Heart right ventricle (tissue), 16 donors: ENCODE measurements at regions of chr16 and their contacts with region 1.

Region 1: GRCh38 chr16:48164907-48165726 is 9.3 kb upstream of the ABCC12 start:
- DNase-seq: peak; percentile 77 to 82
- ATAC-seq: peak; percentile 91 to 98 (median 96)
- H3K4me3 ChIP-seq: no peak overlapping the region
- H3K27ac ChIP-seq: no peak overlapping the region
- H3K4me1 ChIP-seq: peaks cover 0 to 26% (median 7%) of the 10 kb centered on the region in 9 donors
- H3K27me3 ChIP-seq: no peaks in the 10 kb centered on the region
- CTCF ChIP-seq: peak; percentile 73 to 93 (median 87)

Region 2: DNA sequence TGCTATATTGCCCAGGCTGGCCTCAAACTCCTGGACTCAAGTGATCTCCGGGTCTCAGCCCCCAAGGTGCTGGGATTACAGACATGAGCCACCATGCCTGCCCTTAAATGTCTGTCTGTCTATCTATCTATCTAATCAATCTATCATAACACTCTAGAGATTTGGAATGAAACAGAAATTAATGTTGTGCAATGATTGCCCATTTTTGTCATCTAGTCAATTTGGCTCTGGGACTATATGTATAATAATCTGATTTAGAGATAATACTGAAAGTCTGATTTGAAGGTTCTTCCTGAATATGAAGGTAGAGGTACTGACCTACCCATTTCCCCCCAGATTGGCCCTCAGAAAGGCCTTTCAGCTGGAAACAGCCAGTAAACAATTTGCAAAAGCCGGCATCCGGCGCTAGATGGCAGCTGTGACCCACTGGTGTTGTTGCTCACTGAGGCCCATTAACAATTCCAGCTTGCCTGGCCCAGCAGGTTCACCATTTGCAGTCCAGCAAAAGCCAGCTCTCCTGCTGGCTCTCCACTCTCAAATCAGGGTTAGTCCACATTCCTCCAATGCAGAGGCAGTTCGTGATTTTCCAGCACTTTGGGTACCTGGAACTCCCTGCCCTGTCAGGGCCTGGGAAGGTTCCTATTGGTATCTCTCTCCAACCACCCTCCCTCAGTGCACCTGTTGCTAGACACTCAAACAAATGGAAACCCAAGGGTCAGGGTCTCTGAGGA is 1311.2 kb before region 1 on chr16:
- intact Hi-C with region 1: loop called in 3 of 10 experiments (anchors 5 to 10 kb)
- DNase-seq: peak; percentile 74 to 76
- ATAC-seq: peak; percentile 65 to 85 (median 81)
- H3K4me3 ChIP-seq: no peak overlapping the region
- H3K27ac ChIP-seq: no peak overlapping the region
- H3K4me1 ChIP-seq: no peaks in the 10 kb centered on the region
- H3K27me3 ChIP-seq: no peaks in the 10 kb centered on the region
- CTCF ChIP-seq: peak; percentile 68 to 88 (median 82)

Region 3: GRCh38 chr16:46961373-46962353 is 1203.5 kb before region 1 on chr16:
- intact Hi-C with region 1: loop called in 1 of 10 experiments (anchors 10 kb)
- DNase-seq: no peak
- ATAC-seq: peak in 1 of 8 donors; percentile 62
- H3K4me3 ChIP-seq: no peak overlapping the region
- H3K27ac ChIP-seq: peak overlapping the region in 1 of 10 donors; percentile 41
- H3K4me1 ChIP-seq: peaks cover 0 to 23% (median 16%) of the 10 kb centered on the region in 9 donors
- H3K27me3 ChIP-seq: no peaks in the 10 kb centered on the region
- CTCF ChIP-seq: no peak

Region 4: DNA sequence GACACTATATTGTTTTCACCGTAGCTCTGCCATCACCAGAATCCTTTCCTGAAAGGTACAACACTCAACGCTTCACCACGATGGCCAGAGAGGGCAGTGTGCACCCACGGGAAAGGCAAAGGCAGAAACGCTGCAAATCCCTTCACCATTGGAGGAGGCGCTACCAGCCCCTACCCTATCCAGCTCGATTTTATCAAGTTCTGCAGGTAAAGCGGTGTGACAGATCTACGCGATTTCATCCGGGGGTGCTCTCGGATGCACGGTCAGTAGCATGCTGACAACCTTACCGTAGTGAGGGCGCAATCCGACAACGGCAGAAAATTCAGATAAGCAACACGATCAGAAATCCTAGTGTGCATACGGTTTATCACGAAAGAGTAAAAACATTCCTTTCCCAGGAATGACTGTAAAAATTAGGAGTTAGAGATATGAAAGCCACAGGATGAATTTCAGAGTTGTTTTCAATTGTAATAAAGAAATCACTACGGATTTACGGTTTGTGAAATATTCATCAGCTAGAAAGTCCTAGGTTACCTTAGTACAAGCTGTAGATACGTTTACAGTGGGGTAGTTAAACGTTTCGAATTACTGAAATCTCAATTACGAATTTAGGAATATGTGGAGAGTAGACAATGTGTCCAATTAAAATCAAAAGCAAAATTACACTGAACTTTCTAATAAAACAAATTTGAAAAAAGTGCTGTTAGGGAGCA is 1023.2 kb before region 1 on chr16:
- intact Hi-C with region 1: loop called in 5 of 10 experiments (anchors 2 to 5 kb)
- DNase-seq: peak; percentile 77 to 80
- ATAC-seq: peak; percentile 78 to 96 (median 90)
- H3K4me3 ChIP-seq: peak overlapping the region; percentile 13 to 69 (median 60)
- H3K27ac ChIP-seq: peak overlapping the region in 3 of 10 donors; percentile 71 to 82 (median 77)
- H3K4me1 ChIP-seq: peaks cover 0 to 19% (median 6%) of the 10 kb centered on the region in 9 donors
- H3K27me3 ChIP-seq: peaks cover 0 to 16% (median 0%) of the 10 kb centered on the region in 7 donors
- CTCF ChIP-seq: peak; percentile 77 to 98 (median 90)

Region 5: DNA sequence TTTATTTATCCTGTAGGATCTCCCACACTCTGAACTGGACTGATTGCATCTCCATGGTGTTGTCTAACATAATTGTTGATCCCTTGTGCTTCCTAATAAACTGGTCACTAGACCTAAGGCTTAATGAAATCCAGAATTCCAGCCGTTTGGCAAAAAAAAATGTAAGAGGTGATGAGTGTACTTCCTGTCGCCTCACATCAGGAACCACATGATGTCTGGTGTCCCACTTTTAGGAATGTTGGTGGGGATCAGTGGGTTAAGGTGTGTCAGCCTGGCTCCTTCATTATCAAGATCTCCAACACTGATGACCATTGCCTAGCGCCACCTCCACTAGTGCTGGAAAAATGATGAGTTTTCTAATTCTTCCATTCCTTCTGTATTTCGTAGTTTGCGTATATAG is 60.3 kb after region 1 on chr16:
- intact Hi-C with region 1: no loop called
- DNase-seq: no peak
- ATAC-seq: no peak
- H3K4me3 ChIP-seq: no peak overlapping the region
- H3K27ac ChIP-seq: no peak overlapping the region
- H3K4me1 ChIP-seq: no peaks in the 10 kb centered on the region
- H3K27me3 ChIP-seq: peaks cover 0 to 6% (median 0%) of the 10 kb centered on the region in 7 donors
- CTCF ChIP-seq: no peak